BJ (cell line): ENCODE measurements at regions of chr1 and their contacts with region 1.

Region 1: GRCh38 chr1:207963427-207964194 is 52.7 kb upstream of the CD34 start:
- DNase-seq: no peak
- H3K4me3 ChIP-seq: peak overlapping the region; percentile 46
- H3K27me3 ChIP-seq: no peaks in the 10 kb centered on the region
- CTCF ChIP-seq: peak; percentile 64

Region 2: GRCh38 chr1:207811920-207812720 is 151.5 kb before region 1 on chr1:
- CTCF ChIA-PET with region 1: interaction called, 16 read pairs
- POLR2A ChIA-PET with region 1: no interaction called
- DNase-seq: no peak
- H3K4me3 ChIP-seq: no peak overlapping the region
- H3K27me3 ChIP-seq: no peaks in the 10 kb centered on the region
- CTCF ChIP-seq: peak; percentile 64

Region 3: DNA sequence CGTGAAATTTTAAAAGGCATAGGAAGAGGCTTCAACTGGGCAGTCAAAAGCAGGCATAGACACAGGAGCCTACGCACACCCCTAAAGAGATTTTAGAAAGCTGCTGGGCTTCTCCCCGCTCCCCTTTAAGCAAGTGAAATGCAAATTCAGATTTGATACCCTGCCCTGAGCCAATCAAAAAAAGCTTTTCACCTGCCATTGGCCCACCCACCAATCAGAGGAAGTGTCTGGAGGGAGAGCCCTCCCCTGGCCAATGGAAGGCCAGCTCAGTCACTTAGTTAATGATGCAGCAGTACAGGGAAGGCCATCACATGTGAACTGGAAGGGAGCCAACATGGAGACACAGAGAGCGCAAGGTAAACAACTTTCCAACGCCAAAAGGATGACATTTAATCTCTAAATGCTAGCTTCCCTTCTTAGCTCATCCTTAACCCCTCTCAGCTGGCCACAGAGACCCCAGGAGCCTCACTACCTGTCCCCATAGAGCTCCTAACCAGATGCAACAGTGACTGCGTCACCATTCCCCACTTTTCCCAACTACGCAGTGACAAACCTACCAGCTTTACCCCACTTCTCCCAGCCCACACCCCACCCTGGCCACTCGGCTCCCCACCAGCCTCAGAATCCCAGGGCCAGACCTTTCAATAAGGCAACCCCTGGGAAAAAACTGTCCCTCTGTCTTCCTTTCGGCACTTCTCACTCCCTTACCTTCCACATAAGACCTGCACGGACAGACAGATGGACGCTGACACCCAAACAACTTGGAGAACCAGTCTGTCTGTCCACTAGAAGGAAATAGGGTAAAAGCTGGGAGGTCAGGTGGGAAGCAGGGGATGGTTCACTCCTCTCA is 140.8 kb before region 1 on chr1:
- CTCF ChIA-PET with region 1: interaction called, 22 read pairs
- POLR2A ChIA-PET with region 1: interaction called, 17 read pairs
- DNase-seq: no peak
- H3K4me3 ChIP-seq: peak overlapping the region; percentile 50
- H3K27me3 ChIP-seq: no peaks in the 10 kb centered on the region
- CTCF ChIP-seq: no peak

Region 4: DNA sequence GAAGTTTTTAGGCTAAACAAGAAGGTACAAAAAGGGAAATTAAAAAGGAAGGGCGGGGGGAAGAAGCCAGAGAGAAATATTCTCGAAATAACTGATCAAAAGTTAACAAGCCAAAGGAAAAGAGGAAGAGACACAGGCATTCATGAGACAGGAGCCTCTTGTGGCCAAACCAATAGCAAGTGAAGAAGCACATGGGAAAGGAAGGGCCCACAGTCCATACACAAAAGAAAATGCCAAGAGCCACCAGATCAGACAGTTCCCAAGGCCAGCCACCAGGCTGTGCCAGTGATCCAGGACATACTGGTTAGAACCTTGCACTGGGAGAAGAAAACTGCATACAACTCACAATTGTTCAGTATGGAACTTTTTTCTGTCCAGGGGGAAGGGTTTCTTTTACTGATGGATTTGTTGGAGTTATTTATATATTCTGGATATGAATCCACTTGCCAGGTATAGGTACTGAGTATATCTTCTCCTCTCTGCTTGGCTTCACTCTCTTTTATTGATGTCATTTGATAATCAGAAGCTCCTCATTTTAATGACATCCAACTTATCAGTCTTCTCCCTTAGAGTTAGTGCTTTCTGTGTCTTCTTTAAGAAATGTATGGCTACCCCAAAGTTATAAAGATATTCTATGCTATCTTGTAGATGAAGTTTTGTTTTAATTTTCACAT is 135.0 kb before region 1 on chr1:
- CTCF ChIA-PET with region 1: interaction called, 22 read pairs
- POLR2A ChIA-PET with region 1: no interaction called
- DNase-seq: peak; percentile 59
- H3K4me3 ChIP-seq: no peak overlapping the region
- H3K27me3 ChIP-seq: no peaks in the 10 kb centered on the region
- CTCF ChIP-seq: peak; percentile 89

Region 5: GRCh38 chr1:207903767-207904166 is 59.8 kb before region 1 on chr1:
- CTCF ChIA-PET with region 1: interaction called, 117 read pairs
- POLR2A ChIA-PET with region 1: no interaction called
- DNase-seq: no peak
- H3K4me3 ChIP-seq: no peak overlapping the region
- H3K27me3 ChIP-seq: no peaks in the 10 kb centered on the region
- CTCF ChIP-seq: no peak

Region 6: GRCh38 chr1:207910591-207911354 is 52.8 kb before region 1 on chr1 and contains the start of gene CD34:
- CTCF ChIA-PET with region 1: interaction called, 13 read pairs
- POLR2A ChIA-PET with region 1: interaction called, 6 read pairs
- DNase-seq: no peak
- H3K4me3 ChIP-seq: peak within 1 kb of the TSS; percentile 34
- H3K27me3 ChIP-seq: peaks cover 7% of the 10 kb centered on the region
- CTCF ChIP-seq: no peak
- polyA plus RNA-seq, gene CD34: 0.87 and 1.2 TPM in 2 replicates